CD8-positive, alpha-beta T cell (primary cell): ENCODE measurements at regions of chr3 and their contacts with region 1.

Region 1: GRCh38 chr3:10286596-10287330 is 6.0 kb downstream of the GHRL start:
- DNase-seq: peak in 2 of 9 experiments; percentile 41 to 67
- ATAC-seq: peak; percentile 34
- H3K4me3 ChIP-seq: no peak overlapping the region
- H3K4me3 Mint-ChIP-seq: no peak overlapping the region
- H3K27ac ChIP-seq: no peak overlapping the region
- H3K27ac Mint-ChIP-seq: peak overlapping the region; percentile 61
- H3K4me1 ChIP-seq: peaks cover 13% of the 10 kb centered on the region
- H3K4me1 Mint-ChIP-seq: peaks cover 20% of the 10 kb centered on the region
- H3K27me3 ChIP-seq: no peaks in the 10 kb centered on the region
- H3K27me3 Mint-ChIP-seq: no peaks in the 10 kb centered on the region
- CTCF ChIP-seq: peak; percentile 32

Region 2: GRCh38 chr3:9980251-9980650 is 306.5 kb before region 1 on chr3:
- CTCF ChIA-PET with region 1: interaction called, 3 read pairs
- POLR2A ChIA-PET with region 1: no interaction called
- intact Hi-C with region 1: loop called in 1 of 2 experiments (anchors 5 kb)
- DNase-seq: no peak
- ATAC-seq: no peak
- H3K4me3 ChIP-seq: no peak overlapping the region
- H3K4me3 Mint-ChIP-seq: no peak overlapping the region
- H3K27ac ChIP-seq: no peak overlapping the region
- H3K27ac Mint-ChIP-seq: no peak overlapping the region
- H3K4me1 ChIP-seq: peaks cover 7% of the 10 kb centered on the region
- H3K4me1 Mint-ChIP-seq: peaks cover 31% of the 10 kb centered on the region
- H3K27me3 ChIP-seq: no peaks in the 10 kb centered on the region
- H3K27me3 Mint-ChIP-seq: no peaks in the 10 kb centered on the region
- CTCF ChIP-seq: no peak

Region 3: GRCh38 chr3:10198761-10199649 is 87.8 kb before region 1 on chr3:
- CTCF ChIA-PET with region 1: no interaction called
- POLR2A ChIA-PET with region 1: no interaction called
- intact Hi-C with region 1: no loop called
- DNase-seq: peak; percentile 37 to 91 (median 73)
- ATAC-seq: peak; percentile 68
- H3K4me3 ChIP-seq: no peak overlapping the region
- H3K4me3 Mint-ChIP-seq: peak overlapping the region; percentile 64
- H3K27ac ChIP-seq: peak overlapping the region; percentile 15 to 87
- H3K27ac Mint-ChIP-seq: peak overlapping the region; percentile 91
- H3K4me1 ChIP-seq: peaks cover 58% of the 10 kb centered on the region
- H3K4me1 Mint-ChIP-seq: peaks cover 63% of the 10 kb centered on the region
- H3K27me3 ChIP-seq: no peaks in the 10 kb centered on the region
- H3K27me3 Mint-ChIP-seq: no peaks in the 10 kb centered on the region
- CTCF ChIP-seq: no peak